Sigmoid colon (tissue), 7 donors: ENCODE measurements at regions of chr4 and their contacts with region 1.

Region 1: DNA sequence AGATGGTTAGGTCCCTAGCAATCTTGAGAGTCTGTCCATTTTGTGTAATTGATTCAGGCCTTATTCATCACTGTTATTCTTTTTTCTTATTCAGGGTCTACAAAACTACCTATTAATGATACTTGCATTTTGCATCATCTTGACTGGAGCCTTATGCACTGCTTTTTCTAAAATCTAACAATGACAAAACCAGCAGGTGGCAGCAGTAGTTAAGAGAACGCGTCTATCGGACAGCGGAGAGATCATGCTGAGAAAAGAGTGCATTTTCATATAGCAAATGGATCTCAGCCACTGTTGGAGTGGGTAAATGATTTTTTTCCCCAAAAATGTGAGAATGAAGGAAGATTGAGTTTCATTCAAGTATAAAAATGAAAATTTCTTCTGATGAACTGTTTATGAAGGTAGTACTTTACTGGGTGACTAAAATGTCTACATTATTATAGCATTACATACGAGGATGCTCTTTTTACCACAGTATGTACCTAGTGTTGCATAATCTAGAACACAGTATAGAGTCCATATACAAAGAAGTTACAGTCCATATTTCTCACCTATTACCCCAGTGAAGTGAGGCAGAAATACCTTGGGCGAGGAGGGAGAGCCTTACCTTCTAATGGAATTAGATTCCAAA is 43.2 kb downstream of the TMEM144 start:
- DNase-seq: no peak
- H3K4me3 ChIP-seq: no peak overlapping the region
- H3K27ac ChIP-seq: no peak overlapping the region
- H3K4me1 ChIP-seq: no peaks in the 10 kb centered on the region
- H3K27me3 ChIP-seq: no peaks in the 10 kb centered on the region
- CTCF ChIP-seq: peak; percentile 23 to 53 (median 44)
- EP300 ChIP-seq: no peak
- POLR2A ChIP-seq: no peak

Region 2: GRCh38 chr4:157992038-157992705 is 261.3 kb before region 1 on chr4:
- intact Hi-C with region 1: loop called (anchors 1 kb)
- DNase-seq: no peak
- H3K4me3 ChIP-seq: peak overlapping the region; percentile 12 to 40 (median 24)
- H3K27ac ChIP-seq: peak overlapping the region; percentile 18 to 68 (median 62)
- H3K4me1 ChIP-seq: peaks cover 0 to 18% (median 12%) of the 10 kb centered on the region in 4 donors
- H3K27me3 ChIP-seq: no peaks in the 10 kb centered on the region
- CTCF ChIP-seq: peak; percentile 65 to 70 (median 66)
- EP300 ChIP-seq: peak in 2 of 4 donors; percentile 17 to 52
- POLR2A ChIP-seq: no peak

Region 3: GRCh38 chr4:158172261-158173258 is 80.9 kb before region 1 on chr4 and contains the start of gene GASK1B:
- intact Hi-C with region 1: loop called (anchors 10 kb)
- DNase-seq: no peak
- H3K4me3 ChIP-seq: peak within 1 kb of the TSS; percentile 31 to 61 (median 53)
- H3K27ac ChIP-seq: peak within 1 kb of the TSS; percentile 71 to 92 (median 80)
- H3K4me1 ChIP-seq: peaks cover 0 to 70% (median 56%) of the 10 kb centered on the region in 4 donors
- H3K27me3 ChIP-seq: no peaks in the 10 kb centered on the region
- CTCF ChIP-seq: peak; percentile 37 to 55 (median 52)
- EP300 ChIP-seq: no peak
- POLR2A ChIP-seq: no peak
- total RNA-seq, gene GASK1B: 34.4 to 59.5 (median 47.2) TPM

Region 4: DNA sequence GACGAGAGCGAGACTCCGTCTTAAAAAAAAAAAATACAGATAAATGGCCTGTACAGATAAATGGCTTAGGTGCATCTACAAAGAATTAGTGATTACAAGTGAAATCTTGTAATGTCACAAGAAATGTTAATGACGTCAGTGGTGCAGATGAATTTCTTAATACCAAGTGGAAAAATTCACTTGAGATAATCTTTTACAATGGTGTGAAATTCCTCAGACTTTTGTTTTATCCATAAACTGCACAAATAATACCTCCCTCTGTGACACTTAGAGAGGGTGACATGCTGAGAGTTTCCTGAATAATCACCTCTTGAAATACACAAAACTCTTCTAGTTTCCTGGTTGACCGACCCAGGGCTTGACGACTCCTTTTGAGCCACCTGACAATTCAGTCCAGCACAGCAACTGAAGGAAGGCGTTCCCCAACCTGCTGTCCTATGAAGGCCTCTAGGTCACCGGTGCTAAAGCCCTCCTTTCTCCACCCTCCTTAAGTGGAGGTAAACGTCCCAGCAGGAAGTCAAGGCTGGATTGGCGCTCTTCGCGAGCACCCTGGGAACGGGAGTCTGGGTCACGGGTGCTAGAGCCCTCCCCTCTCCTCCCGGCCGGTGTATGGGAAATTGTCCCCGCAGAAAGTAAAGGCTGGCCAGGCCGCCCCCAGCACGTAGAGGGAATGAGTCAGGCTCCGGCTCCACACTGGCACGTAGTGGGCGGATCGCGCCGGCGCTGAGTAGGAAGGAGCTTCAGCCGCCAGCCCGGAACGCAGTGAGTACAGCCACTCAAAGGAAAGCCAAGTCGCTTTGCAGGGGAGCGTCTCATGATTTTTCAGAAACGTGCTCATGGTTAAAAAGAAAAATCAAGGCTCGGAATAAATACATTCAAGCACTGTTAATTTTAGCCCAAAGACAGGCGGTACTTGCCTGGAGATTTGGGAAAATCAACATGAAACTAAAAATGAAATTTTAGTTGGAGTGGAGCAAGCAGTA is 43.3 kb before region 1 on chr4 and contains the start of gene TMEM144:
- intact Hi-C with region 1: loop called (anchors 5 kb)
- DNase-seq: peak; percentile 96
- H3K4me3 ChIP-seq: peak within 1 kb of the TSS; percentile 21 to 45 (median 44)
- H3K27ac ChIP-seq: peak within 1 kb of the TSS; percentile 84 to 87 (median 87)
- H3K4me1 ChIP-seq: peaks cover 0 to 10% (median 7%) of the 10 kb centered on the region in 4 donors
- H3K27me3 ChIP-seq: no peaks in the 10 kb centered on the region
- CTCF ChIP-seq: no peak
- EP300 ChIP-seq: peak in 1 of 4 donors; percentile 41
- POLR2A ChIP-seq: peak; percentile 30 to 62
- total RNA-seq, gene TMEM144: 3.5 to 12.1 (median 8.0) TPM

Region 5: DNA sequence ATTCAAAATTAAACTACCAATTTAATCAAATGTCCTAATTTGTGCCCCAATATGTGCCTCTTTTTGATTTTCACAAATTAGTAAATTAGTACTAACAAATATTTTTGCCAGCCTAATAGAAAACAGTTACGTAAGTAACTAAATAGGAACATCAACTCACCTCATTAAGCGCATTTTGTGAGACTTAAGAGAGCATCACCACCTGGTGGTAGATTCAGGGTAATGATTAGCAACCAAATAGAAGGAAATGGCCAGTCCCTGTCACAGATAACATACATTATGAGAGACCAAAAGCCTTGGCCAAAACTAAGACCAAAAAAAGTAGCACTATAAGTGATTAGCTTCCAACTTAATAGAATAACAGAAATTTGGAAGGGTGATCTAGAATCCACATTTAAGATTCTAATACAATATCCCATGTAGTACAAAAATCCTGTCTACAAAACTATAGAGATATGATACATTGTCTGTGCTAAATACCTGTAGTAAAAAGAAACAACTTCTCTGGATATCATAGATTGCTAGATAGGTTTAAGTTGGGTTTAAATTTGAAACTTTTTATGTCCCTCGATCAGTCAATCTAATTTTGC is 371.5 kb after region 1 on chr4:
- intact Hi-C with region 1: loop called (anchors 2 kb)
- DNase-seq: no peak
- H3K4me3 ChIP-seq: no peak overlapping the region
- H3K27ac ChIP-seq: no peak overlapping the region
- H3K4me1 ChIP-seq: peaks cover 0 to 14% (median 4%) of the 10 kb centered on the region in 4 donors
- H3K27me3 ChIP-seq: no peaks in the 10 kb centered on the region
- CTCF ChIP-seq: peak; percentile 41 to 68 (median 52)
- EP300 ChIP-seq: no peak
- POLR2A ChIP-seq: no peak

Region 6: DNA sequence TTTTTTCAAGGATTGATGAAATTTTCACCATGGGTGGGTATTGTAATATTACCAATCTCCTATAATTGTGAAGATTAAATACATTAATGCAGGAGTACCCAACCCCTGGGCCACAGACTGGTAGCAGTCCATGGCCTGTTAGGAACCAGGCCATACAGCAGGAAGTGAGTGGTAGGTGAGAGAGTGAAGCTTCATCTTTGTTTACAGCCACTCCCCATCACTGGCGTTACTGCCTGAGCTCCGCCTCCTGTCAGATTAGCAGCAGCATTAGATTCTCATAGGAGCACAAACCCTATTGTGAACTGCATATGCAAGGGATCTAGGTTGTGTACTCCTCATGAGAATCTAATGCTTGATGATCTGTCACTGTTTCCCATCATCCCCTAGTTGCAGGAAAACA is 864.5 kb after region 1 on chr4:
- intact Hi-C with region 1: no loop called
- DNase-seq: no peak
- H3K4me3 ChIP-seq: no peak overlapping the region
- H3K27ac ChIP-seq: no peak overlapping the region
- H3K4me1 ChIP-seq: peaks cover 0 to 27% (median 1%) of the 10 kb centered on the region in 4 donors
- H3K27me3 ChIP-seq: no peaks in the 10 kb centered on the region
- CTCF ChIP-seq: no peak
- EP300 ChIP-seq: no peak
- POLR2A ChIP-seq: no peak